ENCODE measurements at regions of chr10 and their contacts with region 1.

Region 1: GRCh38 chr10:118754720-118755480 is at the start of gene CACUL1:
- DNase-seq: peak; percentile 99
- ATAC-seq: peak; percentile 97
- H3K4me3 Mint-ChIP-seq: peak within 1 kb of the TSS; percentile 92
- H3K27ac Mint-ChIP-seq: peak within 1 kb of the TSS; percentile 84
- H3K4me1 Mint-ChIP-seq: peaks cover 27% of the 10 kb centered on the region
- H3K27me3 Mint-ChIP-seq: peaks cover 6% of the 10 kb centered on the region
- CTCF ChIP-seq: no peak
- total RNA-seq, gene CACUL1: 25.6 to 26.1 TPM

Region 2: DNA sequence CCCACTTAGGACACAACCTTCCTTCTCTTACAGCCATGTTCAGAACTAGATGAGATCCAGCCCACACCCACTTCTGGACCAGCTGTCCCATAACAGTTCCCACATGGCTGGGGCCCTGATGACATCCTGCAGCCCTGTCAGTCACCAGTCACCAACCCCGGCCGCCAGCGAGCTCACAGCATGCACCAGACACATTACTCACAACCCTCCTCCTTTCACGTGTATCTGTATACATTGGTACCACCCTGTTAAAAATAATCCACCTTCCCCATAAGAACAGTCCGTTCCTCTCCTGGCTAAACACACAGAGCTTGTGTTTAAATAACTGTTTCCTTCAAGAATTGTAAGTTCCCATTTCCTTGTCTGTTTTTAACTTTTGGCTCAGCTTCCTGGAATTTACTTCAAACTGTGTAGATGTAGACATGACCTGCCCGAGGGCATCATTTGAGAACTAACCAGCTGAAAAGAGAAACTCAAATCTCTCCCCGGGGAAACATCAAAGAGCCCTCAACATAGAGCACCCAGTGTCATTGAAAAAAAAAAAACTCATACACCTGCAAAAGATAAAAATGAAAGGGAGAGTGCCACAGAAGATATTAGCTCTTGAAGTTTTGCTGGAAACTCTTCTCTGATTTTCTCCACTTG is 133.5 kb before region 1 on chr10:
- CTCF ChIA-PET with region 1: no interaction called
- POLR2A ChIA-PET with region 1: no interaction called
- intact Hi-C with region 1: no loop called
- DNase-seq: peak; percentile 47
- ATAC-seq: peak; percentile 84
- H3K4me3 Mint-ChIP-seq: no peak overlapping the region
- H3K27ac Mint-ChIP-seq: no peak overlapping the region
- H3K4me1 Mint-ChIP-seq: peaks cover 11% of the 10 kb centered on the region
- H3K27me3 Mint-ChIP-seq: no peaks in the 10 kb centered on the region
- CTCF ChIP-seq: no peak

Region 3: GRCh38 chr10:118642228-118642627 is 112.7 kb before region 1 on chr10:
- CTCF ChIA-PET with region 1: no interaction called
- POLR2A ChIA-PET with region 1: no interaction called
- intact Hi-C with region 1: no loop called
- DNase-seq: no peak
- ATAC-seq: no peak
- H3K4me3 Mint-ChIP-seq: no peak overlapping the region
- H3K27ac Mint-ChIP-seq: no peak overlapping the region
- H3K4me1 Mint-ChIP-seq: no peaks in the 10 kb centered on the region
- H3K27me3 Mint-ChIP-seq: no peaks in the 10 kb centered on the region
- CTCF ChIP-seq: no peak

Region 4: DNA sequence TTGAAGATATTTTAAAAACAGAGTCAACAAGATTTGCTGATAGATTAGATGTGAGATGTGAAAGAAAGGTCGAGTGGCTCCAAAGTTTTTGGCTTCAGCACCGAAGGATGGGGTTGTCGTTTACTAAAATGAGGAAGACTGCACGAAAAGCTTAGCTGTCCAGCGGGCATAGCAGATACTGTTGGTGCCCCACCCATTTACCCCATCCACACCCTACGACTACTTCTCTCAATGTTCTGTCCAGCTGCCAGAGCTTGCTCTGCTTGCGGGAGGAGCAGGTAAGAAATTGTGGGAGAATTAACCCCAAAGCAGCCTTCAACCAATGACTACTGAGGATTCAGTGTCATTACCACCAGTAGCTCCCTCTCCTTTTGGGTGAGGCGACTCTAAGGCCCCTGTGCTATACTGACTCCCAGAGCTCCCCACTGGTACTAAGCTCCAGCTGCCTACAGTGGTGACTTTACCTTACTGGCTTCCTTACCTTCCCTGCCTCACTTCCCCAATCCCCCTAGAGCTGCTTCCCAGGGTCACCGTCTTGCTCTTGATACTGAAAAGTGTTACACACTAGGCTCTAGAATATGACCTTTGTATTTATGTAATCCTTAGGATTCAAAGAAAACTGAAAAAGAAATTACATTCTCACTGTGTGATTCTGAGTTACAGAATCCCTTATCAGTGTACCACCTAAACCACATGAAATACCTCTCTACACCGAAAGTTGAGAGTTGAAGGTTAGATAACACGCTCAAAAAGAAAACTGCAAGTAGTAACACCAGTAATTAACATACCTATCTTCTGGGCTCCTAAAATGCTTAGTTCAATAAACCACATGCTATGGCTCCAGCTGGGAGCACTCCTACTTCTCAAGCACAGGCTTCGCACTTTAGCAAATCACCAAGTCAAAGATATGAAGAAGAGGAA is 22.4 kb before region 1 on chr10:
- CTCF ChIA-PET with region 1: interaction called, 16 read pairs
- POLR2A ChIA-PET with region 1: interaction called, 10 read pairs
- intact Hi-C with region 1: no loop called
- DNase-seq: no peak
- ATAC-seq: peak; percentile 74
- H3K4me3 Mint-ChIP-seq: peak overlapping the region; percentile 10
- H3K27ac Mint-ChIP-seq: peak overlapping the region; percentile 14
- H3K4me1 Mint-ChIP-seq: peaks cover 75% of the 10 kb centered on the region
- H3K27me3 Mint-ChIP-seq: no peaks in the 10 kb centered on the region
- CTCF ChIP-seq: no peak

Region 5: GRCh38 chr10:118737603-118738302 is 17.1 kb before region 1 on chr10:
- CTCF ChIA-PET with region 1: interaction called, 16 read pairs
- POLR2A ChIA-PET with region 1: interaction called, 10 read pairs
- intact Hi-C with region 1: no loop called
- DNase-seq: no peak
- ATAC-seq: no peak
- H3K4me3 Mint-ChIP-seq: no peak overlapping the region
- H3K27ac Mint-ChIP-seq: no peak overlapping the region
- H3K4me1 Mint-ChIP-seq: peaks cover 76% of the 10 kb centered on the region
- H3K27me3 Mint-ChIP-seq: no peaks in the 10 kb centered on the region
- CTCF ChIP-seq: no peak

Measured in activated CD8-positive, alpha-beta T cell treated with anti-CD3 and anti-CD28 coated beads for 36 hours (primary cell).